Naive thymus-derived CD8-positive, alpha-beta T cell (primary cell): ENCODE measurements at regions of chr14 and their contacts with region 1.

Region 1: DNA sequence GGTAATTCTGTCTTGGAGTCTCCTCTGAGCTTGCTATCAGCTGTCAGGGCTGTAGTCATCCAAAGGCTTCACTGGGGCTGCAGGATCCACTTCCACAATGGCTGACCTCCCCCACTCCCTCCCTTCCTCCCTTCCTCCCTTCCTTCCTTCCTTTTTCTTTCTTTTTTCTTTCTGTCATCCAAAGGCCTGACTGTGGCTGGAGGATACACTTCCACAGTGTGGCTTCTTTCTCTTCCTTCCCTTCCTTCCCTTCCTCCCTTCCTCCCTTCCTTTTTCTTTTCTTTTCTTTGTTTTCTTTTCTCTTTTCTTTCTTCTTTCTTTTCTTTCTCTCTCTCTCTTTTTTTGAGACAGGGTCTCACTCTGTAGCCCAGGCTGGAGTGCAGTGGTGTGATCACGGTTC is 30.6 kb downstream of the ARF6 start:
- DNase-seq: no peak
- ATAC-seq: no peak
- H3K4me3 Mint-ChIP-seq: no peak overlapping the region
- H3K27ac Mint-ChIP-seq: peak overlapping the region in 5 of 10 donors; percentile 5 to 86 (median 40)
- H3K4me1 Mint-ChIP-seq: peaks cover 7 to 33% (median 8%) of the 10 kb centered on the region in 4 donors
- H3K27me3 Mint-ChIP-seq: no peaks in the 10 kb centered on the region

Region 2: GRCh38 chr14:49908432-49908781 is 15.0 kb before region 1 on chr14:
- POLR2A ChIA-PET with region 1: interaction called, 10 read pairs
- DNase-seq: no peak
- ATAC-seq: no peak
- H3K4me3 Mint-ChIP-seq: no peak overlapping the region
- H3K27ac Mint-ChIP-seq: peak overlapping the region in 1 of 10 donors; percentile 25
- H3K4me1 Mint-ChIP-seq: peaks cover 6 to 47% (median 20%) of the 10 kb centered on the region in 4 donors
- H3K27me3 Mint-ChIP-seq: no peaks in the 10 kb centered on the region

Region 3: DNA sequence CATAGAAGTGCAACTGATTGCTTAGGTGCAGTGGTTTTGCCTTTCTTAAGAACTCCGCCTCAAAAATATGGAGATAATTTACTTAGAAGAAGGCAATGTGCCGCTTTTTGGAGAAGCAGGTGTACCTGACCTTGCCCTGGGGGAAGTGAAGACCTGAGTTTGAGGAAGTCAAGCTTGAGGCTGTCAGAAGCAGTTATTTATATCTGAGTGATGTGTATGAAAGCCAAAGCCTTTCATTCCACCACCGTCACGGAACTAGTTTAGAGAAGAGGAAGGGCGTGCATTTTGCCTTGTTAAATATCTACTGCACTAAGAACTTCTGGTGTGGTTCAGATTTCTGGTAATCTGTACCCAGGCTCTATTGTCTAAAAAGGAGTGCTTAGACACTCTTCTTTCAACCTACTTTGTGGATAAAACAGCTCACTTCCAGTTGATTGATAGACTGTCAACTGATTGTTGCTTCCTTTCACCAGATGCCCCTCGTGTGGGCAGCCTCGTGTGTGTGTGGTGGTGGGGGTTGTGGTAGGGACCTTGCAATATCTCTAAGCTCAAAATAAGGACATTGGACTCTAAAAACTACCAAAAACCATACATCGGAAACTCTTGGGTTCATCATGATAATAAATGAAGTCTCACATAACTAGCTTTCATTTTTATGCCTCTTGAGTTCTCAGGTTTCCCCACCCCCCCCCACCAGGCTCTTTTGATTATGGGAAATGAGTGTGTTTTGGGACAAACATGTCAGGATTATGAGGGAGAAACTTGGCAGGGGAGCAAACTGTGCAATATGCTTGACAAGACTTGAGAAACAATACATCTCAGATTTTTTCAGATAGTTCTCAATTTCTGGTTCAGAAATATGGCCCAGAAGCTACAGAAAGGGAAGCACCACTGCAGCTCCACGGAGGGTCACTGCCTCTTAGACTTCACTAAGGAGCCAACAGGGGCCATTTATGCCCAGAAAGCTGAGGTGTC is 48.0 kb after region 1 on chr14:
- POLR2A ChIA-PET with region 1: no interaction called
- DNase-seq: peak; percentile 19 to 91 (median 68)
- ATAC-seq: peak; percentile 86 to 91
- H3K4me3 Mint-ChIP-seq: peak overlapping the region; percentile 68 to 90 (median 83)
- H3K27ac Mint-ChIP-seq: peak overlapping the region; percentile 93 to 98 (median 96)
- H3K4me1 Mint-ChIP-seq: peaks cover 37 to 74% (median 62%) of the 10 kb centered on the region in 4 donors
- H3K27me3 Mint-ChIP-seq: no peaks in the 10 kb centered on the region